ENCODE measurements at regions of chr15 and their contacts with region 1.

Region 1: GRCh38 chr15:60507596-60508424 is 28.9 kb upstream of the ICE2 start:
- DNase-seq: peak; percentile 81
- ATAC-seq: peak; percentile 98
- H3K4me3 ChIP-seq: no peak overlapping the region
- H3K4me3 Mint-ChIP-seq: peak overlapping the region; percentile 52
- H3K27ac ChIP-seq: peak overlapping the region in 1 of 2 donors; percentile 53
- H3K27ac Mint-ChIP-seq: peak overlapping the region; percentile 62
- H3K4me1 ChIP-seq: peaks cover 0 to 8% of the 10 kb centered on the region in 2 donors
- H3K4me1 Mint-ChIP-seq: peaks cover 14% of the 10 kb centered on the region
- H3K27me3 ChIP-seq: no peaks in the 10 kb centered on the region
- H3K27me3 Mint-ChIP-seq: no peaks in the 10 kb centered on the region
- CTCF ChIP-seq: peak; percentile 94

Region 2: DNA sequence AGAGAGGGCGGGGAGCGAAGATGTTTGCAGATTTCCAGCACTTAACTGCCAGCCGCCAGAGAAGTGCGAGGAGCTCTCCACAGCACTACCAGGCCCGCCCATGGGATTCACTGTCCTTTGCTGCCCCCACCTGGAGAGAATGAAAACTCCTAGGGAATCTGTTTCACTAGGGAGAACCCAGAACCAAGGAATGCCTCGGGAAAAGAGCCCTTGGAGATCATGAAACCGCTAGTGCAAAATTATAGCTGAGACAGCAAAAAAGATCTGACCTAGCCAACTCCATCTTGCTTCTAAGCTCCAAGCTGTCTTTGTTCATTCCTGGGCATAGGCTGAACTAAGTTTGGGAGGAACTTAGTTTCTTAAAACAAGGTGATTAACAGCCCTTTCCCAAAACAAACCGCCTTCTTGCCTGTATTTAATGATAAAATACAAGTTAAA is 978.8 kb before region 1 on chr15:
- CTCF ChIA-PET with region 1: no interaction called
- POLR2A ChIA-PET with region 1: no interaction called
- intact Hi-C with region 1: no loop called
- DNase-seq: peak; percentile 82
- ATAC-seq: peak; percentile 69
- H3K4me3 ChIP-seq: no peak overlapping the region
- H3K4me3 Mint-ChIP-seq: no peak overlapping the region
- H3K27ac ChIP-seq: peak overlapping the region in 1 of 2 donors; percentile 30
- H3K27ac Mint-ChIP-seq: peak overlapping the region; percentile 54
- H3K4me1 ChIP-seq: peaks cover 18 to 33% of the 10 kb centered on the region in 2 donors
- H3K4me1 Mint-ChIP-seq: peaks cover 25% of the 10 kb centered on the region
- H3K27me3 ChIP-seq: no peaks in the 10 kb centered on the region
- H3K27me3 Mint-ChIP-seq: no peaks in the 10 kb centered on the region
- CTCF ChIP-seq: peak; percentile 86

Region 3: GRCh38 chr15:60362321-60363086 is 145.3 kb before region 1 on chr15:
- CTCF ChIA-PET with region 1: interaction called, 34 read pairs
- POLR2A ChIA-PET with region 1: no interaction called
- intact Hi-C with region 1: loop called (anchors 5 kb)
- DNase-seq: no peak
- ATAC-seq: no peak
- H3K4me3 ChIP-seq: no peak overlapping the region
- H3K4me3 Mint-ChIP-seq: no peak overlapping the region
- H3K27ac ChIP-seq: no peak overlapping the region
- H3K27ac Mint-ChIP-seq: peak overlapping the region; percentile 22
- H3K4me1 ChIP-seq: no peaks in the 10 kb centered on the region
- H3K4me1 Mint-ChIP-seq: no peaks in the 10 kb centered on the region
- H3K27me3 ChIP-seq: no peaks in the 10 kb centered on the region
- H3K27me3 Mint-ChIP-seq: no peaks in the 10 kb centered on the region
- CTCF ChIP-seq: no peak

Region 4: GRCh38 chr15:60478566-60479360 is 29.0 kb before region 1 on chr15 and contains the start of gene ICE2:
- CTCF ChIA-PET with region 1: interaction called, 5 read pairs
- POLR2A ChIA-PET with region 1: no interaction called
- intact Hi-C with region 1: loop called (anchors 1 kb)
- DNase-seq: peak; percentile 95
- ATAC-seq: peak; percentile 93
- H3K4me3 ChIP-seq: peak within 1 kb of the TSS; percentile 76 to 97 (median 89)
- H3K4me3 Mint-ChIP-seq: peak within 1 kb of the TSS; percentile 99
- H3K27ac ChIP-seq: peak within 1 kb of the TSS; percentile 85 to 95
- H3K27ac Mint-ChIP-seq: peak within 1 kb of the TSS; percentile 97
- H3K4me1 ChIP-seq: peaks cover 23 to 28% of the 10 kb centered on the region in 2 donors
- H3K4me1 Mint-ChIP-seq: peaks cover 52% of the 10 kb centered on the region
- H3K27me3 ChIP-seq: no peaks in the 10 kb centered on the region
- H3K27me3 Mint-ChIP-seq: no peaks in the 10 kb centered on the region
- CTCF ChIP-seq: no peak
- total RNA-seq, gene ICE2: 65.9 and 71.2 TPM in 2 replicates

Region 5: DNA sequence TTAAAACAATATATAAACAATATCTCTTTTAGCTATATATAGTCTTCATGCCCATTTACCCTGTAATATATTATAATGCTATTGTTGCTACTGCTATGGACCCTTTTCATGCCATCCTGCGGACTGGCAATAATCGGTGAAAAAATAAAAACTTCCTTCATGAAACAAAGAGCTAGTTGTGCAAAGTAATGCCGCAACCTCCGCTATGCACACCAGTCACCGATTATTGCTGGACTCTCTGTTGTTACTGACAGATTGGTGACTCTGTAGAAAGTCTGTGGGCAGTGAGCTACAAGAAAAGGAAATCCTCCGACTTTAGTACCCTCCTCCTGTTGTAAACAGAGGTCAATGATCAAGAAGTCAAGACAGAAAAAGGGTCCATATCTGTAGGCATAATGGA is 11.0 kb before region 1 on chr15:
- CTCF ChIA-PET with region 1: interaction called, 20 read pairs
- POLR2A ChIA-PET with region 1: no interaction called
- intact Hi-C with region 1: no loop called
- DNase-seq: no peak
- ATAC-seq: no peak
- H3K4me3 ChIP-seq: no peak overlapping the region
- H3K4me3 Mint-ChIP-seq: no peak overlapping the region
- H3K27ac ChIP-seq: no peak overlapping the region
- H3K27ac Mint-ChIP-seq: no peak overlapping the region
- H3K4me1 ChIP-seq: no peaks in the 10 kb centered on the region
- H3K4me1 Mint-ChIP-seq: peaks cover 2% of the 10 kb centered on the region
- H3K27me3 ChIP-seq: no peaks in the 10 kb centered on the region
- H3K27me3 Mint-ChIP-seq: no peaks in the 10 kb centered on the region
- CTCF ChIP-seq: no peak

Region 6: DNA sequence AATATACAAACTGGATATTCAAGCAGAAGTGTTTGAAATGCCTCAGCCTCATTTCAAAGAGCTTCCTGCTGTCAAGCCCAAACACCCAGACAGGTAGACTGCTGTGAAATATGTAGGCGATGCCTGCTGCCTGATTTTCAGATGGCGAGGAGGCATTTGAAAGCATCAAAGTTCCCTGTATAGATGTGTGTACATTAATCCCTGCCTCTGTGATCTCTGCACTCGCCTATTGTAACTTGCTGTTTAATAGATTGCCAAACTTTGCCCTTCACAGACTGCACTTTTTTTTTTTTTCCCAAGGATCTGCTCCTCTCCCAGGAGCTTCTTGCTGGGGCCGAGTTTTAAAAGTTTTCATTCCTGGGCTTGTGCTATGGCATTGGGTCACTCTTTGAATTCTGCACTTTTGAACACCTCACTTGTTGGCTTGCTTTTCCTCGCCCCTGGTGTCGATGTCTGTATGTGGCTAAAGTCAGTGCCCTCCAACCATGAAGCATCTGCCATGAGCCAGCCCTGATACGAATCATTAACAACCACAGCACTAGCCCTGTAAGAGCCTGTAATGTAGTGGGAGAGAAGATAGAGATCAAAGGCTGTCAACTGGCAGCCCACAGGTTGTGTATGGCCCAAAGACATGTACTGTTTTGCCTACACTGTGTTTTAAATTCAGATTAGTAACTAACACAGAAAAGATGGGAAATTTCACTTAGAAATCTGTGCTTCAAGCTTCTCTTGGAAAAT is 258.8 kb after region 1 on chr15:
- CTCF ChIA-PET with region 1: no interaction called
- POLR2A ChIA-PET with region 1: no interaction called
- intact Hi-C with region 1: no loop called
- DNase-seq: no peak
- ATAC-seq: no peak
- H3K4me3 ChIP-seq: no peak overlapping the region
- H3K4me3 Mint-ChIP-seq: no peak overlapping the region
- H3K27ac ChIP-seq: no peak overlapping the region
- H3K27ac Mint-ChIP-seq: no peak overlapping the region
- H3K4me1 ChIP-seq: no peaks in the 10 kb centered on the region
- H3K4me1 Mint-ChIP-seq: no peaks in the 10 kb centered on the region
- H3K27me3 ChIP-seq: no peaks in the 10 kb centered on the region
- H3K27me3 Mint-ChIP-seq: peaks cover 8% of the 10 kb centered on the region
- CTCF ChIP-seq: no peak

Region 7: DNA sequence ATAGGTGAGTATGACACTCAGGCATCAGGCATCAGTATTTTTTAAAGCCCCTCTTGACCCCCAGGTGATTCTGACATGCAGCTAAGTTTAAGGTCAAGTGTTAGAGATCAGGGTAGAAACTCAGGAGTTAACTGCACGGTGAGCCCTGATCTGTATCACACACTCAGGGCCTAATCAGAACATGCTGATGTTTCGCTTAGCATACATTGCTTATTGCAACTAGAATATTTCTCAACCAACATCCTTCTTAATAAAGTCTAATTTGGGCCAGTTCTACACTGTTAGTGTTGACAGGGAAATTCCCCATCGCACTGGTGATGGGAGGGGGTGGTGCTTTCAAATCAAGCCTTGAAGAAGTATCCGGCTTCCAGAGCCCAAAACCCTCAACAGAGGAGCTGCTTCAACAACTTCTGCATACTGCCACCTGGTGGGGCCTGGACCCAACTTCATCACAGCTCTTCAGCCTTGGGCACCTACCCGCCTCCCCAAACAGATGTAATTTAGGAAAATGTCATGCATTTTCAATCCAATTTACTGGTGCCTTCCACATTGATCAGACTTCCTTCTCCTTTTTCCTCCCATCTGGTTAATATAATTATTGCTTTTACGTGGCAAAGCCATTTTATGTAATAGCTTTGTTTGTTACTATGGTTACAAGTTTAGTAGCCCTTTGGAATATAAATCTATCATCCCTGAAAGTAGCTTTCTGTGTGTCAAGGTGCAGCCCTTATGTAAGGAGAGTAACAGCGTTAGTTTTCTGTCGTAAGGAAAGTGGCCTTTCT is 409.1 kb after region 1 on chr15:
- CTCF ChIA-PET with region 1: interaction called, 12 read pairs
- POLR2A ChIA-PET with region 1: no interaction called
- intact Hi-C with region 1: loop called (anchors 2 kb)
- DNase-seq: peak; percentile 86
- ATAC-seq: peak; percentile 95
- H3K4me3 ChIP-seq: no peak overlapping the region
- H3K4me3 Mint-ChIP-seq: no peak overlapping the region
- H3K27ac ChIP-seq: peak overlapping the region in 1 of 2 donors; percentile 12
- H3K27ac Mint-ChIP-seq: no peak overlapping the region
- H3K4me1 ChIP-seq: peaks cover 11 to 13% of the 10 kb centered on the region in 2 donors
- H3K4me1 Mint-ChIP-seq: peaks cover 14% of the 10 kb centered on the region
- H3K27me3 ChIP-seq: peaks cover 0 to 2% (median 0%) of the 10 kb centered on the region in 4 experiments
- H3K27me3 Mint-ChIP-seq: no peaks in the 10 kb centered on the region
- CTCF ChIP-seq: peak; percentile 86

Region 8: DNA sequence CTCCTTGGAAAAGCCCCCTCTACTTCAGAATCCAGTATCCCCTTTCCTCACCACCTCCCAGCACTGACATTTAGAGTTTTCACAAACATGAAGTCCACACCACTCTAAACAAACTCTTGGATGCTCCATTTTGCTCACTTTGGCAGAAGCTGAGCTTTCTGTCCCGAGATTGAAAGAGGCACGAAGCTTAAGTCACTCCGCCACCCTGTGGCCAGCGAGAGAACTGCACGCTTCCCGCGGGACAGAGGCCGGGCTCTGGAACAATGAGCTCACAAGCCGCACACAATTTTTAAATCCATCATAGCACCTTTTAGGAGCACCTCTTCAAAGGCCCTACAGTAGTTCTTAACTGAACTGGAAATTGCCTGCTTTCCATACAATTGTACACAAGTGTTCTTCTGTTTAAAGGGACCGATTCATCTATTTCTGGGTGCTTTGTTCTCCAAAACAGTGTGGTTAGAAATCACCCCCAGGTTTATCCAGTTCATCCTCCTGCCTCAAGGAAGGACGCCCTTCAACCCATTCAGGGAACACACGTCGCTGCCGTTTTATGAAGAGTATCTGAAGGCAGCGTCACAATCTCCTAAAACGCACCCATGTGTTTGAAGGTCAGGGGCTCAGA is 1326.4 kb after region 1 on chr15:
- CTCF ChIA-PET with region 1: interaction called, 4 read pairs
- POLR2A ChIA-PET with region 1: no interaction called
- intact Hi-C with region 1: loop called (anchors 10 kb)
- DNase-seq: peak; percentile 72
- ATAC-seq: peak; percentile 83
- H3K4me3 ChIP-seq: no peak overlapping the region
- H3K4me3 Mint-ChIP-seq: no peak overlapping the region
- H3K27ac ChIP-seq: no peak overlapping the region
- H3K27ac Mint-ChIP-seq: no peak overlapping the region
- H3K4me1 ChIP-seq: peaks cover 0 to 7% of the 10 kb centered on the region in 2 donors
- H3K4me1 Mint-ChIP-seq: peaks cover 4% of the 10 kb centered on the region
- H3K27me3 ChIP-seq: peaks cover 0 to 24% (median 4%) of the 10 kb centered on the region in 4 experiments
- H3K27me3 Mint-ChIP-seq: peaks cover 45% of the 10 kb centered on the region
- CTCF ChIP-seq: peak; percentile 95

Measured in B cell (primary cell).